PC-9 (cell line): ENCODE measurements at regions of chr3 and their contacts with region 1.

Region 1: DNA sequence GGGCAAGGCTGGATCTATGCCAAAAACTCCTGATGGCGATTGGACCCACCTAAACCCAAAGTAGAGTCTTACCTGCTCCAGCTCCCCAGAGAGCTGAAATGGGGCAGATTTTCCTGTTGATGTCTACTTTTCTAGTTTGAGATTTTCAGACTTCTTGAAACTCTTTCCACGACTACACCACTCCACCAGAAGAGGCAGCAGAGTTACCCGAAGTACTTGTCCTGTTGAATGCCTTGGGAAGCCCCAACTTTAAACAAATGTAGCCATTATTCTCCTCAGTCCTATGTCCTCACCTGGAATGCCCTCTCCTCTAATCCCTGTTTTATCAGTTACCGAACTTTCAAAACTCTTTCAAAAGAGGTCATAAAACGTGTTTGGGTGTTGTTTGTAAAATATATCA is 843.8 kb downstream of the VGLL3 start:
- DNase-seq: no peak
- H3K4me3 ChIP-seq: no peak overlapping the region
- H3K27ac ChIP-seq: no peak overlapping the region
- H3K4me1 ChIP-seq: no peaks in the 10 kb centered on the region
- H3K27me3 ChIP-seq: no peaks in the 10 kb centered on the region
- CTCF ChIP-seq: no peak; the same call in 1 of the 2 replicates

Region 2: GRCh38 chr3:86161493-86161892 is 14.4 kb after region 1 on chr3:
- CTCF ChIA-PET with region 1: no interaction called
- POLR2A ChIA-PET with region 1: no interaction called
- intact Hi-C with region 1: loop called (anchors 1 kb)
- DNase-seq: no peak
- H3K4me3 ChIP-seq: no peak overlapping the region
- H3K27ac ChIP-seq: no peak overlapping the region
- H3K4me1 ChIP-seq: no peaks in the 10 kb centered on the region
- H3K27me3 ChIP-seq: no peaks in the 10 kb centered on the region
- CTCF ChIP-seq: no peak